Prostate gland (tissue), 2 donors: ENCODE measurements at regions of chr17 and their contacts with region 1.

Region 1: GRCh38 chr17:21284319-21285163 is at the start of gene MAP2K3:
- DNase-seq: peak; percentile 100
- H3K4me3 ChIP-seq: peak within 1 kb of the TSS; percentile 82
- H3K27ac ChIP-seq: peak within 1 kb of the TSS; percentile 86 to 88
- H3K4me1 ChIP-seq: peaks cover 26% of the 10 kb centered on the region
- H3K27me3 ChIP-seq: no peaks in the 10 kb centered on the region
- CTCF ChIP-seq: peak in 2 of 4 experiments; percentile 5 to 27
- POLR2A ChIP-seq: peak; percentile 98
- total RNA-seq, gene MAP2K3: 24.0 to 25.9 TPM

Region 2: DNA sequence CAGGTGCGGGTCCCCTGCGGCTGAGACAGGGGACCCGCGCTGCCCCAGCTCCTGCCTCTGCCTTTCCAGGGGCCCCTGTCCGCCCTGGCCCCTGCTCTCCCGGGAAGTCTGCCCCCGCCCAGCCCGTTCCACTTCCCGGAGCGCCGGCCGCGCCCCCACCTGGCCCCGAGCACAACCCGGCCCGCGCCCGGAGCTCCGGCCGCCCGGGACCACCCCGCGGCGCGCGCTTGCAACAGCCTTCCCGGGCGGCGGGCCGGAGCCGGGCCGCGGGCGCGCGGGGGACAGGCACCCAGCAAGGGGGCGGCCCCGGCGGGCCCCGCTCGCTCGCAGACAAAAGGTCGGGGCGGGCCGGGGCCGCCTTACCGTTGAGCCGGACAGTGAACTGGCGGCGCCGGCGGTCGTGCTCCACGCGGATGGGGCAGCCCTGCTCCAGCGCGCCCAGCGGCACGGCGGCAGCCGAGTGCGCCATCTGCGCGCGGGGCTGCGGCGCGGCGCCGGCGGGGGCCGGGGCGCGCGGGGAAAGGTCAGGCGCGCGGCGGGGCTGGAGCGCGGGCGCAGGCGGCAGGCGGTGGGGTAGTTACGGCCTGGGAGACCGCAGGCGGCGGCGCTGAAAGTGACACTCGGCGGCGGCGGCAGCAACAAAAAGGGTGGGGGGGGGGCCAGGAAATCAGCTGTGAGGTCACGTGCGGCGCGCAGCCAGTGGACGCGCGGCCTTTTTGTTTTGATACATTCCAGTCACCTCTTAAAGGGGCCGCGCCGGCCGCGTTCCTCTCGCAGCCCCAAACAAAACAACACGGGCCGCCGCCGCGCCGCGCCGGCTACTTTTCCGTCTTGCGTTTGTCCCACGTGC is 31.5 kb before region 1 on chr17 and contains the start of gene NATD1:
- intact Hi-C with region 1: loop called (anchors 2 kb)
- DNase-seq: peak; percentile 87
- H3K4me3 ChIP-seq: peak within 1 kb of the TSS; percentile 59 to 69
- H3K27ac ChIP-seq: peak within 1 kb of the TSS; percentile 73 to 75
- H3K4me1 ChIP-seq: peaks cover 9% of the 10 kb centered on the region
- H3K27me3 ChIP-seq: no peaks in the 10 kb centered on the region
- CTCF ChIP-seq: peak in 1 of 4 experiments; percentile 6
- POLR2A ChIP-seq: peak; percentile 59
- total RNA-seq, gene NATD1: 16.5 to 26.3 TPM

Region 3: GRCh38 chr17:21318439-21318838 is 33.9 kb after region 1 on chr17:
- intact Hi-C with region 1: loop called (anchors 5 kb)
- DNase-seq: no peak
- H3K4me3 ChIP-seq: no peak overlapping the region
- H3K27ac ChIP-seq: no peak overlapping the region
- H3K4me1 ChIP-seq: no peaks in the 10 kb centered on the region
- H3K27me3 ChIP-seq: no peaks in the 10 kb centered on the region
- CTCF ChIP-seq: no peak
- POLR2A ChIP-seq: no peak

Region 4: GRCh38 chr17:21457051-21458026 is 172.8 kb after region 1 on chr17:
- intact Hi-C with region 1: loop called (anchors 5 kb)
- DNase-seq: peak; percentile 77
- H3K4me3 ChIP-seq: no peak overlapping the region
- H3K27ac ChIP-seq: no peak overlapping the region
- H3K4me1 ChIP-seq: no peaks in the 10 kb centered on the region
- H3K27me3 ChIP-seq: no peaks in the 10 kb centered on the region
- CTCF ChIP-seq: peak; percentile 87 to 92 (median 89)
- POLR2A ChIP-seq: no peak